ENCODE measurements at regions of chr19 and their contacts with region 1.

Region 1: DNA sequence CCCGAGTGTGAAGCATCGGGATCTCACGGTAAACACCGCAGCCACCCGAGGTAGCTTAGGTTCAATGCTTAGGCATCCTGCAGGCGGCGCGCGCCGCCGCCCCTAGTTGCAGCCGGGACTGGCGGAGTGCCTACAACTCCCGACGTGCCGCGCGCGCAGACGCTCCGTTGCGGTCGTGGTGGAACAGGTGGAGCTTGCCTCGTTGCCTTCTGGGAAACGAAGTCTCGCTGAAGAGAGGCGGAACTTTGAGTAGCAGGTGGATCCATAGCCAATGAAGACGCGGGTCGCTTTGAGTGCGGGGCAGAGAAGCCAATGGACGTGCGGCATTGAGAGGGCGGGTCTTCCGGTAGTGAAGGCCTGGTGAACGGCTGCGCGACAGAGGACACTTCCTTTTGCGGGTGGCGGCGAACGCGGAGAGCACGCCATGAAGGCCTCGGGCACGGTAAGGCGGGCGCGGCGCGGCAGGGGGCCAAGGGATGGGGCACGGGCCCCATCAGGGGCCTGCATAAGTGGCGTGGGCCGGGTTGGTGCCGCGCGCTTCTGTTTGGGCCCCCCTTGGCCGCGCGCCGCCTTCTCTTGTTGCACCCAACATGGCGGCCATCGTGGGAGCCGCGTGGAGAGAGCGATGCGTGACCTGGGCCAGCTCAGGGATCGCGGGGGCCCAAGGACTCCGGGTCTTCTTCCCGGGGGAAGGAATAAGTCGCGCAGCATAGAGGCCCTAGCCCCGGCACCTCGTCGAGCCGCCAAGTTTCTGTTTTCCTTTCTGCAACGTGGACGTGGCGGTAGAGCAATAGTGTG is at the start of gene RPL18A:
- DNase-seq: peak; percentile 100
- H3K4me3 Mint-ChIP-seq: peak within 1 kb of the TSS; percentile 100
- H3K27ac Mint-ChIP-seq: peak within 1 kb of the TSS; percentile 99
- H3K4me1 Mint-ChIP-seq: peaks cover 41% of the 10 kb centered on the region
- H3K27me3 Mint-ChIP-seq: peaks cover 3% of the 10 kb centered on the region
- total RNA-seq, gene RPL18A: 3,104 to 3,138 TPM

Region 2: DNA sequence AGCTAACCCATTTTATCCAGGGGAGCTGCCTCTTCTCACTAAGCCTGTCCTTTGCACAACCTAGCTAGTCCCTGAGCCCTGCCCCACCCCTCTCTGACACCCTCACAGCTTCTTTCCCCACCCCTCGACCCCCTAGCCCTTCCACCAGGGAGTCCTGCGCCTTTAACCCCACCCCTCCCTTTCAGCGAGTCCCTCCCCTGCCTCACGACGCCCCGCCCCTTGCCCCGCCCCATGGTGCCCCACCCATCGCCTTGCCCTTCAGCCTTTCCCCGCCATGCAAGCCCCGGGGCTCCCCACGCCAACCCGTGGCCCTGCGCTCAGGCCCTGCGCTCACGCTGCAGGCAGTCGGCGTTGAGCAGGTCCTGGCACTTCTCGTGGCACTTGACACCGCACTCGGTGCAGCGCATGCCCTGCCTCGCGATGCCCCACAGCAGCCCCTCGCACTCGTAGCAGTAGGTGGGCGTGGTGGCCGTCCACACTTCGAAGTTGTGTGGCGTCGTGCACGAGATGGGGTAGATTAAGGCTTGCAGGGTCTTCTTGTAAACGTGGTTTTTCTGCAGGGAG is 211.6 kb before region 1 on chr19:
- CTCF ChIA-PET with region 1: no interaction called
- POLR2A ChIA-PET with region 1: no interaction called
- intact Hi-C with region 1: no loop called
- DNase-seq: no peak
- H3K4me3 Mint-ChIP-seq: no peak overlapping the region
- H3K27ac Mint-ChIP-seq: no peak overlapping the region
- H3K4me1 Mint-ChIP-seq: no peaks in the 10 kb centered on the region
- H3K27me3 Mint-ChIP-seq: peaks cover 17% of the 10 kb centered on the region

Region 3: DNA sequence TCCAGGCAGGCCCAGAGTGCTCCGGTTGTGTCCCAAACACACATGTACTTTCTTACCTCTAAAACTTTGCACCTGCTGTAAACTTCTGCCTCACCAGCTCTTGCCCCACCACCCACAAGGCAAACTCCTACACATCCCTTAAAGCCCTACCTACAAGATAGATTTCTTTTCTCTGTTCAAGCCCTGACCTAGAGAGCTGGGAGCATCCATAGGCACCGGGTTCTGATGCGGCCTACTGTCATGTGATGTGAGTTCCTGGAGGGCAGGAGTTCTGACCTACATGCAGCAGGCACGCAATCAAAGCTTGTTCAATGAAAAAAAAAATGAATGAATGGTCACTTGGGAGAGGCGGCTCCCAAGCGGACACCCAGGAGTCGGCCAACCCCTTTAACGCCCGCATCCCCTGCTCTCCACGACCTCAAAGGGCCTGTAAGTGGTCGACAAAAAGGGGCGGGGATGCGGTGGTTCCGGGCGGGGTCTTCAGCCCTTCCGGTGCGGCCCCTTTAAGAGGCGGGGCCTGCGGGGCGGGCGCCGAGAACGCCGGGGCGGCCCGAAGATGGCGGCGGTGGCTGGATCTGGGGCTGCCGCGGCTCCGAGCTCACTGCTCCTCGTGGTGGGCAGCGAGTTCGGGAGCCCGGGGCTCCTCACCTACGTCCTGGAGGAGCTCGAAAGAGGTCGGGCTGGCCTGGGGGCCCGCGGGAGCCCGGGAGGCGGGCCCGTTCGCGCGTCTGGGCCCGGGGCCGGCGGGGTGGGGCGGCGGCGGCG is 140.6 kb before region 1 on chr19 and contains the start of gene MAP1S:
- CTCF ChIA-PET with region 1: interaction called, 11 read pairs
- POLR2A ChIA-PET with region 1: no interaction called
- intact Hi-C with region 1: loop called (anchors 5 kb)
- DNase-seq: peak; percentile 76
- H3K4me3 Mint-ChIP-seq: peak within 1 kb of the TSS; percentile 83
- H3K27ac Mint-ChIP-seq: peak within 1 kb of the TSS; percentile 77
- H3K4me1 Mint-ChIP-seq: peaks cover 30% of the 10 kb centered on the region
- H3K27me3 Mint-ChIP-seq: no peaks in the 10 kb centered on the region
- total RNA-seq, gene MAP1S: 63.0 to 71.2 TPM

Region 4: DNA sequence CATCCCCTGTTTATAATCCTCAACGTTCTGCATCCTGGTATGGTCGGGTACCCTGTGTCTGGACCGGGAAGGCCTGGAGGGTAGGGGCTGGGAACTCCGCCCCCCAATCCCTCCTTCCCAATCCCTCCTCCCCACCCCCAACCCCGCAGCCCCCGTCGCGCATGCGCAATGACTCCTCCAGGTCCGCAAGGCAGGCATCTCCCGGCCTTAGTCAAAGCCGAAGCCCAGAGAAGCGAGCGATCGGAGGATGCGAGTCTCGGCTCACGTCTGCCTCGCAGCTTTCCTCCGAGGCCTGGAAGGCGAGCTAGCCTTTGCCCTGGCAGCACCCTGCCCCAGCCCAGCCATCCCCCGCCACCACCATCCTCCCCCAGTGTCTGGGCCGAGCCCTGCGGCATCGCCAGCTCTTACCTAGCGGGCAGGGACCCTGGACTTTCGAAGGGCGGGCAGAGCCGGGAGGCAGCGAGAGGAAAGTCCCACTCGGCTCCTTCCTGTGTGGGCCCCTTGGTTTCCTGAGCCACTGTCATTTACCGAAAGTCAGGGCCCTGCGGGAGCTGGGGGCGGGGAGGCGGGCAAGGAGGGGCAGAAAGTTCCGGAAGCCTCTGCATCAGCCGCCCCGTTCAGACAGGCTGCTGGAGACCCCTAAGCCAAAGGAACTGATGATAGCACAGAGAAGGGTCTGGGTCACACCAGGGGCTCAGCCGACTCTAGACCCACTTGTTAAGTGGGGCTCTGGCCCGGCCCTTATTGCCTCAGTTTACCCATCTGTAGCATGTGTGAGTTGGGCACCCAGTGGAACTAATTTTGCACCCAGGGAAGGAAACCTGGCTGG is 12.0 kb before region 1 on chr19 and contains the start of gene JAK3:
- CTCF ChIA-PET with region 1: interaction called, 63 read pairs
- POLR2A ChIA-PET with region 1: interaction called, 99 read pairs
- intact Hi-C with region 1: loop called (anchors 1 kb)
- DNase-seq: peak; percentile 96
- H3K4me3 Mint-ChIP-seq: peak within 1 kb of the TSS; percentile 93
- H3K27ac Mint-ChIP-seq: peak within 1 kb of the TSS; percentile 97
- H3K4me1 Mint-ChIP-seq: peaks cover 62% of the 10 kb centered on the region
- H3K27me3 Mint-ChIP-seq: peaks cover 2% of the 10 kb centered on the region
- total RNA-seq, gene JAK3: 200 to 217 TPM

Region 5: GRCh38 chr19:17932485-17933338 is 73.0 kb after region 1 on chr19 and contains the start of gene CCDC124:
- CTCF ChIA-PET with region 1: interaction called, 186 read pairs
- POLR2A ChIA-PET with region 1: interaction called, 93 read pairs
- intact Hi-C with region 1: loop called (anchors 1 kb)
- DNase-seq: peak; percentile 96
- H3K4me3 Mint-ChIP-seq: peak within 1 kb of the TSS; percentile 91
- H3K27ac Mint-ChIP-seq: peak within 1 kb of the TSS; percentile 92
- H3K4me1 Mint-ChIP-seq: peaks cover 30% of the 10 kb centered on the region
- H3K27me3 Mint-ChIP-seq: no peaks in the 10 kb centered on the region
- total RNA-seq, gene CCDC124: 101 to 105 TPM

Region 6: GRCh38 chr19:18000935-18001778 is 141.4 kb after region 1 on chr19:
- CTCF ChIA-PET with region 1: interaction called, 17 read pairs
- POLR2A ChIA-PET with region 1: interaction called, 5 read pairs
- intact Hi-C with region 1: loop called (anchors 2 kb)
- DNase-seq: peak; percentile 95
- H3K4me3 Mint-ChIP-seq: peak overlapping the region; percentile 87
- H3K27ac Mint-ChIP-seq: peak overlapping the region; percentile 97
- H3K4me1 Mint-ChIP-seq: peaks cover 22% of the 10 kb centered on the region
- H3K27me3 Mint-ChIP-seq: no peaks in the 10 kb centered on the region

Measured in activated CD4-positive, alpha-beta memory T cell treated with anti-CD3 and anti-CD28 coated beads for 36 hours (primary cell).